Posterior cingulate gyrus (tissue), 11 donors: ENCODE measurements at regions of chr2 and their contacts with region 1.

Region 1: DNA sequence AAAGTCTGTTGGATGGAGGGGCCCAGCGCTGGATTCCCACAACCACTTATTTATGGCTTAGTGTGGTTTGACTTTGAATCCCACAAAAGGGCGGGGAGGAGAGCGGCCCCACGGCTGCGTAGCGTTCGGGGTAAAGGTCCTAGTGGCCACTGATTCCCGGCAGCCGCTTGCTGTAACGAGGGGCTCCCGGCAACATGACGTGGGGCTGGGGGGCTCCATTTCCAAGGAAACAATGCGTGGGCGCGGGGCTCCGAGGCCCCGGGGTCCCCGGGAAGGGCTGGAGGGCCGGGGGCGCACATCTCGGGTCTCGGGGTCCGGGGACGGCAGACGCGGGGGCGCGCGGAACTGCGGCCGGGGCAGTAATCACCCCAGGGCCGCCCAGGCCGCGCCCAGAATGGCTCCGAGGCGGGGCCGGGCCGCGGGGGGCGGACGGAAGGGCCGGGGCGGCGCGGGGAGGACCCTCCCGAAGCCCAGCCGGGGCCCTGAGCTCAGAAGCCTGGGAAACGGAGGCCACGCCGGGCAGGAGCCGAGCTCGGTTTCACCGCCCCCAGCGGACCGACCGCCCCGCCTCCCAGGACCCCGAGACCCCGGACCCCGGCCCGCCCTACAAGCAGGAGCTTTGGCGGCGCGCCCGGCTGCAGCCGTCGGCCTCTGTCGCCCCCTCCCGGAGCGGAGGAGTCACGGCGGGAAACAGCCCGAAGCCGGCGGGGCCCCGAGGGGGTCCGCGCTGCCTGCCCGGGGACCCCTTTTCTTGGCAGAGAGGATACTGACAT is 11.9 kb upstream of the MLPH start:
- DNase-seq: peak; percentile 56 to 97 (median 80)

Region 2: DNA sequence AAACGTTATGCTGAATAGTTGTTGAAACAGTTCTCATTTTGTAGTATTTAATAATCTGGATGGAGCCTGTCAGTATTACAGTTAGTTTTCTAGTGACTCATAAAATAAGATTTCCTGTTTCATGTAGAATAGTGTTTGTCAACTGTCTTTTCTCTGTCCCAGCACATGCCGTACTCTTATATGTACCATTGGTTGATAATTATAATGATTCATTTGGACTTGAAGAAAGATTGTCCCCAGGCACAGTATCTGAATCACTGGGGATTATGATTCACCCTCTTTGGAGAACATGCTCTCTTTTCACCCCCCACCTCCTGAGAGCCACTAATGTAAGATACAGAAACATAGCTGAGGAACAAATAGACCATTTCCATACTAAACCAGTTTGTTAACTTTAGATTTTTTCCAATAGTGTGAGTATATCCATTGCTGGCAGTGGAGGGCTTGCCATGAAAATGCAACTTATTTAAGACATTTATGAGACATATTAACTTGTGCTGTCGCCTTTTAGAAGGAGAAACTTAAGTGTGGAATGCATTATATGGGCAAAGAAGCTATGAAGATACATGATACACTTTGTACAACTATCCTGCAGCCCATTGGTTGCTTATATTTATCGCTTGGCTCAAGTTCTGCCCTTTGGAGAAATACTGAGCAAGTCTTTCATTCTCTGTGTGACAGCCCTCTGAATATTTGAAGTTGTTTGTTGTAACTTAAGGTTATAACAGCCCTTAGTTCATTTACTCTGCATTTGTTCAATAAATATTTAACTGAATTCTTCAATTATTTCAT is 377.0 kb before region 1 on chr2:
- intact Hi-C with region 1: no loop called
- DNase-seq: no peak

Region 3: GRCh38 chr2:237154082-237154638 is 321.0 kb before region 1 on chr2:
- intact Hi-C with region 1: loop called (anchors 10 kb)
- DNase-seq: no peak

Region 4: DNA sequence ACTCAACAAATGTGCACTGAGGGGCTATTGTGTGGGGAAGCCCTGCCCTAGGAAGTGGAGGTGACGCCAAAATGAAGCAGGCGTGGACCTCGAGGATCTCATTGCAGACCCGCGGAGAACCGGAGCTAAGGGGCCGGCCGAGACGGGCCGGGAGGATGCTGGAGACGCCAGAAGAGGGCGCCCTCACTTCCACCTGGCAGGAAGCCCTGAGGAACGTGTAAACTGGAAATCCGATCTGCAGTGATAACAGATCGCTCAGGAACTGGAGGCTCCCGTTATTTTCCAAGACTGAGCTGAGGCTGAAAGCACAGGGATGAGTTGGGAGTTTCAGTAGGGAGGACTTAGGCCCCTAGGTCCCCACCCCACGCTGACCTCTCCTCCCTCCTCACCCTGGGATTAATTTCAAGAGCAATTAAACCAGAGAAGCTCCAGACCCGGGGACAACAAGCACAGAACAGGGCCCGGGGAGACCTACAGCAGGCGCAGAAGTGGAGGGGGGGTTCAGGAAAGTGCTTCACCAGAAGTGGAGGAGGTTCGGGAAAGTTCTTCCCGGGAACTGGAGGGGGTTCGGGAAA is 53.5 kb before region 1 on chr2:
- intact Hi-C with region 1: loop called (anchors 5 kb)
- DNase-seq: peak in 9 of 10 donors; percentile 45 to 95 (median 65)

Region 5: GRCh38 chr2:237662671-237663093 is 187.6 kb after region 1 on chr2:
- intact Hi-C with region 1: no loop called
- DNase-seq: peak in 5 of 10 donors; percentile 14 to 82 (median 25)